GM18951 (cell line): ENCODE measurements at regions of chr6 and their contacts with region 1.

Region 1: GRCh38 chr6:125512621-125513020 is 210.9 kb upstream of the HDDC2 start:
- POLR2A ChIP-seq: no peak

Region 2: GRCh38 chr6:124829822-124830221 is 682.8 kb before region 1 on chr6:
- in situ Hi-C with region 1: no loop called
- POLR2A ChIP-seq: no peak

Region 3: DNA sequence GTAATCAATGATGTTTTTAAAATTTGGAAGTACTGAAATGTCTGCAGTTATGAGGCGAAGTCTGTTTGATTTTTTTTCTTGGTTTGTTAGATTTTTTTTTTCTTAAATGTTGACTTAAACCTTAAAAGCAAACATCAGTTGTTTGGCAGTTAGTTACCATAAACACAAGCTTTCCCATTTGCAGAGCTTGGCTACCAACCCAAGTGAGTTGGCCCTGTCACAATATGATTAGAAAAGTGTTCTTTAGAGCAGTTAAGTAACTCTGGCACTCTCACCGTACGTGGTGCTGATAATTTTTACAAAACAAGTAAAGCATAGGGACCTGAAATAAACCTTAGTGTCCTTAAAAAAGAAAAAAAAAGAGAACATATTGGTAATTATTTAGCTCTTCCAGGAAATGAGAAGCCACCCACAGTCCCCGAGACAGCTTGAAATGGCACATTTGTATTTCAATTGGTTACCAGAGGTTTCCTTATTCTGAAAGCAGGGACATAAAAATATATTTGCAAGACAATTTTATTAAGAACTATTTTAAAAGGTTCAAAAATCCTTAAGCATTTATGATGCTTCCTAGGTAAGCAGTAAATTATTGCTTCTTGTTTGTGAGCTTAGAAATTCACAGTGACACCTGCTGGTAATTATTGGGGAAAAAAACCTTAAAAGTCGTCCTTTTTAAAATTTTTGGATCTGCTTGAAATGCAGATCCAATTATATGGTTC is 240.8 kb after region 1 on chr6:
- in situ Hi-C with region 1: loop called (anchors 25 kb)
- POLR2A ChIP-seq: no peak